Thyroid gland (tissue), 4 donors: ENCODE measurements at regions of chr15 and their contacts with region 1.

Region 1: DNA sequence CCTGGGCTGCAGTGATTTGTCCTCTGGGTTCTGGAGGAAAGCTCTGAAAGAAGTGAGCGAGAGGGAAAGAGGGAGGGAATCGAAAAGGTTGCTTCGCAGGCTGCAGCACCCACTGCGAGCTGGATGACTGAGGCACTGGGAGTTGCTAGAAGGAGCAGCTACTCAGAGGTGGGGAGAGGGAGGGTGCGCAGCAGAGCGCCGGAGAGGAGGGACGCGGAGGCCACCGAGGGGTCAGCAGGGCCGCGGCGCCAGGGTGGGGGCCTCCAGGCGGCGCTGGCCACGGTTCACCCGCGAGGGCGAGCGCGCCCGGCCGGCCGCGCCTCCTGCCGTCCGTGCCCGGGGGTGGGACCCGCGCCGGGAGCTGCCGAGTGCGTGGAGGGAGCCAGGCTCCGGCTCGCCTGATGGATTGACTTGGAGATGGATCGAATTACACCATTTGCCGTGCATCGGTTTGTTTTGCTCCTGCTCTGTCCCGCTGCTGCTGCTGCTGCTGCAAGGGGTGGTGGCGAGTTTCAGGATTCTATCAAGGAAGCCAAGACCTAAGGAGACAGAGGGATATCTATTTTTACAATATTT is at the start of gene SEMA6D:
- DNase-seq: peak; percentile 84 to 86
- H3K4me3 ChIP-seq: peak within 1 kb of the TSS; percentile 47 to 65 (median 57)
- H3K27ac ChIP-seq: peak within 1 kb of the TSS; percentile 81 to 95 (median 94)
- H3K4me1 ChIP-seq: peaks cover 14 to 34% of the 10 kb centered on the region in 2 donors
- H3K27me3 ChIP-seq: no peaks in the 10 kb centered on the region
- CTCF ChIP-seq: peak in 5 of 6 experiments; percentile 17 to 62 (median 54)
- POLR2A ChIP-seq: peak in 1 of 2 donors; percentile 77
- total RNA-seq, gene SEMA6D: 9.3 to 17.7 (median 14.3) TPM

Region 2: DNA sequence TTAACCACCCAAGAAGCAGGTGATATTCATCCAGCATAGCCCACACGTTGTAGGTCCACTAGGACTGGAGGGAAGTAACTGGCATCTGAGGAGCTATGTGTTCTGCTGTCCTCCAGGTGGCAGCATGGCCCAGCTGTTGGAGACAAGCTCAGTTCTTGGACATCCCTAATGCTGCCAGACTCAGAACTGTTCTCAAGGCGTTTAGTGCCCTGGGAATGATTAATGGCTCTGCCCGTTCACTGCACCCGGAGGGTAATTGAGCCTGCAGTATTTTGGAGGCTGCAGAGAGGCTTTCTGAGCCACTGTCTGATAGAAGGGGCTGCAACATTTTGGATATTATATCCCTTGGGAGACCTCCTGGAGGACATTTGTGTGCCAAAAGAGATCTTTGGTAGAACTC is 521.1 kb before region 1 on chr15:
- intact Hi-C with region 1: loop called (anchors 10 kb)
- DNase-seq: peak; percentile 82 to 88
- H3K4me3 ChIP-seq: no peak overlapping the region
- H3K27ac ChIP-seq: no peak overlapping the region
- H3K4me1 ChIP-seq: peaks cover 10 to 23% of the 10 kb centered on the region in 2 donors
- H3K27me3 ChIP-seq: no peaks in the 10 kb centered on the region
- CTCF ChIP-seq: peak; percentile 54 to 91 (median 82)
- POLR2A ChIP-seq: no peak

Region 3: DNA sequence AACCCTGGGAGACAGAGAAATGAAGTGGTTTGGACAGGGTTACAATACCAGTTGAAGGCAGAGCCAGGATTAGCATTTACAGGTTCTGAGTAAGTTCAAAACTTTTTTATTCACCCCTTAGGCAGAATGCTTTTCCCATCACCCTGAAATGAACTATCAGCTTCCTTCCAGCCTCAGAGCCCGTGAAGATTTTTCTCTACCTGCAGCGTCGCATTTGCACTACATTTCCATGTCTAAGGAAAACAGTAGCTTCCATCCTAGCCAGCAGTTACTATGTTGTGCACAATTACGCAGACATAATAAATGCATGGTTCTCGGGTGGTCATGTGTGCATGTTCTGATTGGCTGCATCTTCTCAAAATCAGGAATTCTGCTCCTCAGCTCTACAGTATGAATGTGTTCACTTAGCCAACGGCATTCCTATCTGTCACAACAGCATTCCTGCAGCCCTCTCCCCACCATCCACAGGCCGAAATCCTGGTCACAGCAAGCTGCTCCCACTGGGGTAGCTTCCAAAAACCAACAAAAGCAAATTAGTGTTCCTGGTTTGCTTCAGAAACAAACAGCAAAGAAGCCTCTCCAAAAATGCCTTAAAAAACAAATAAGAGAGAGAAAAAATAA is 510.7 kb before region 1 on chr15:
- intact Hi-C with region 1: no loop called
- DNase-seq: peak; percentile 6 to 37
- H3K4me3 ChIP-seq: no peak overlapping the region
- H3K27ac ChIP-seq: peak overlapping the region in 2 of 3 donors; percentile 66 to 73
- H3K4me1 ChIP-seq: peaks cover 17 to 25% of the 10 kb centered on the region in 2 donors
- H3K27me3 ChIP-seq: no peaks in the 10 kb centered on the region
- CTCF ChIP-seq: no peak
- POLR2A ChIP-seq: no peak

Region 4: DNA sequence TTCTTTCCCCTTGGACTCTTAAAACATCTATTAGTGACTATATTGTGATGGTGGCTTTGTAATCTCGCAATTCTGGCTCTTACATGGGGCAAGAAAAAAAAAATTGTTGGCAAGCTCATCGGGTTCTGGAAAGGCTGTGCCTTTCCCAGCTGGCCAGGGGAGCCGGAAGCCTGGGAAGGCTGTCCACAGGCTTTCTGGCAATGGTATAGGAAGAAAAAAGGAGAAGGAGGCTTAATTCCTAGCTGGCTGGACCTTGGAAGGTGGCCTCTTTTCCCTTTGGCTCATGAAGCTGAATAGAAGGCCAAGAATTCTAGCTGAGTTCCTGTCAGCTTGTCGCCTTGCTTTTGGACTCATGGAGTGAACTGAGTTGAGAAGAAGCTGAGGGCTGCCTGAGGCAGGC is 243.3 kb before region 1 on chr15:
- intact Hi-C with region 1: loop called (anchors 5 kb)
- DNase-seq: peak; percentile 1 to 5
- H3K4me3 ChIP-seq: no peak overlapping the region
- H3K27ac ChIP-seq: peak overlapping the region in 1 of 3 donors; percentile 20
- H3K4me1 ChIP-seq: peaks cover 3 to 8% of the 10 kb centered on the region in 2 donors
- H3K27me3 ChIP-seq: no peaks in the 10 kb centered on the region
- CTCF ChIP-seq: no peak
- POLR2A ChIP-seq: no peak

Region 5: GRCh38 chr15:47663101-47663500 is 54.0 kb before region 1 on chr15:
- intact Hi-C with region 1: no loop called
- DNase-seq: no peak
- H3K4me3 ChIP-seq: no peak overlapping the region
- H3K27ac ChIP-seq: no peak overlapping the region
- H3K4me1 ChIP-seq: no peaks in the 10 kb centered on the region
- H3K27me3 ChIP-seq: no peaks in the 10 kb centered on the region
- CTCF ChIP-seq: no peak
- POLR2A ChIP-seq: no peak

Region 6: GRCh38 chr15:47756872-47757271 is 39.7 kb after region 1 on chr15:
- intact Hi-C with region 1: no loop called
- DNase-seq: no peak
- H3K4me3 ChIP-seq: no peak overlapping the region
- H3K27ac ChIP-seq: no peak overlapping the region
- H3K4me1 ChIP-seq: peaks cover 0 to 16% of the 10 kb centered on the region in 2 donors
- H3K27me3 ChIP-seq: no peaks in the 10 kb centered on the region
- CTCF ChIP-seq: no peak
- POLR2A ChIP-seq: no peak

Region 7: GRCh38 chr15:47803767-47804166 is 86.6 kb after region 1 on chr15:
- intact Hi-C with region 1: loop called (anchors 10 kb)
- DNase-seq: no peak
- H3K4me3 ChIP-seq: no peak overlapping the region
- H3K27ac ChIP-seq: no peak overlapping the region
- H3K4me1 ChIP-seq: no peaks in the 10 kb centered on the region
- H3K27me3 ChIP-seq: no peaks in the 10 kb centered on the region
- CTCF ChIP-seq: no peak
- POLR2A ChIP-seq: no peak

Region 8: GRCh38 chr15:47987908-47988532 is 270.9 kb after region 1 on chr15:
- intact Hi-C with region 1: loop called (anchors 5 kb)
- DNase-seq: peak; percentile 10 to 15
- H3K4me3 ChIP-seq: no peak overlapping the region
- H3K27ac ChIP-seq: no peak overlapping the region
- H3K4me1 ChIP-seq: peaks cover 0 to 8% of the 10 kb centered on the region in 2 donors
- H3K27me3 ChIP-seq: no peaks in the 10 kb centered on the region
- CTCF ChIP-seq: peak in 5 of 6 experiments; percentile 26 to 78 (median 70)
- POLR2A ChIP-seq: no peak